ENCODE measurements at regions of chr6 and their contacts with region 1.

Region 1: DNA sequence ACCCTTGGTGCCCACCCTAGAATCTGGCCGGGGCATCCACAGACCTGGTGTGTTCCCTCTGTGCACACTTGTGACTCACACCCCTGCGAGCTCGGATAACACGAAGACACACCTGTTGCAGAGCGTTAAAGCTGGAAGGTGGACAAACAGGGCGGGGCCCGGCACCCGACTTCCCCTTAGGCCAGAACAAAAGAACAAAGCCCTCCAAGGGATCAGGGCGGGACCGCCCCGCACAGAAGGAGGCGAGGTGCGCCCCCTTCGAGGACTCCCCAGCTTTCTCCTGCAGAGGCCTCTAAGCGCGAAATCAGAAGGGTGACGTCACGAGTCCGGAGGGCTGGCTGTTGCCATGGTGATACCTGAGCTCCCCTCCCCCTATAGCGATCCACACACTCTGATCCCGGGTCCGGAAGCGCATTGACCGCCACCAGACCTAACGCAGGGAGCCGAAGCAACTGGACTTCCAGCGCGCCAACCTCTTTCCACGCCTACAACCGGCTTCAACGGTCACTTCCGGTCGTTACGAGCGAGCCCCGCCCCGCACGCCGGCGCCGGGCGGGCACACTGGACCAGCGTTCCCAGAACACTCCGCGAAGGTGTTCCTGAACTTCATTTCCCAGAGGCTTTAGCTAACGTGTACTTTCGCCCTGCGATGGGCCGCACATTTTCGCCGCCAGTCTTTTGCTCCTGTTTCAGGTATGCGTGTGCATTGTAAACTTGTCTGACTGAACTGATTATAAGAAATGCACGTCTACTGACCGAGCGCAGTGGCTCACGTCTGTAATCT is at the start of gene ZNF184:
- DNase-seq: peak; percentile 74 to 88 (median 86)
- ATAC-seq: peak; percentile 88
- H3K4me3 ChIP-seq: peak within 1 kb of the TSS; percentile 85
- H3K4me3 Mint-ChIP-seq: peak within 1 kb of the TSS; percentile 85 to 98 (median 97)
- H3K27ac ChIP-seq: peak within 1 kb of the TSS; percentile 93
- H3K27ac Mint-ChIP-seq: peak within 1 kb of the TSS; percentile 90 to 99 (median 96)
- H3K4me1 ChIP-seq: peaks cover 13 to 23% of the 10 kb centered on the region in 2 donors
- H3K4me1 Mint-ChIP-seq: peaks cover 40 to 55% (median 52%) of the 10 kb centered on the region in 7 donors
- H3K27me3 ChIP-seq: no peaks in the 10 kb centered on the region
- H3K27me3 Mint-ChIP-seq: peaks cover 0 to 9% (median 0%) of the 10 kb centered on the region in 5 donors
- total RNA-seq, gene ZNF184: 9.6 to 13.7 (median 12.3) TPM

Region 2: GRCh38 chr6:27177485-27178406 is 295.1 kb before region 1 on chr6:
- CTCF ChIA-PET with region 1: no interaction called
- POLR2A ChIA-PET with region 1: interaction called, 22 read pairs
- intact Hi-C with region 1: loop called (anchors 1 to 2 kb)
- DNase-seq: peak; percentile 49 to 78 (median 66)
- ATAC-seq: peak; percentile 83
- H3K4me3 ChIP-seq: peak overlapping the region; percentile 99
- H3K4me3 Mint-ChIP-seq: peak overlapping the region; percentile 90 to 98 (median 96)
- H3K27ac ChIP-seq: peak overlapping the region; percentile 74
- H3K27ac Mint-ChIP-seq: peak overlapping the region; percentile 79 to 100 (median 95)
- H3K4me1 ChIP-seq: peaks cover 0 to 3% of the 10 kb centered on the region in 2 donors
- H3K4me1 Mint-ChIP-seq: peaks cover 0 to 33% (median 14%) of the 10 kb centered on the region in 7 donors
- H3K27me3 ChIP-seq: no peaks in the 10 kb centered on the region
- H3K27me3 Mint-ChIP-seq: peaks cover 0 to 37% (median 0%) of the 10 kb centered on the region in 5 donors

Region 3: DNA sequence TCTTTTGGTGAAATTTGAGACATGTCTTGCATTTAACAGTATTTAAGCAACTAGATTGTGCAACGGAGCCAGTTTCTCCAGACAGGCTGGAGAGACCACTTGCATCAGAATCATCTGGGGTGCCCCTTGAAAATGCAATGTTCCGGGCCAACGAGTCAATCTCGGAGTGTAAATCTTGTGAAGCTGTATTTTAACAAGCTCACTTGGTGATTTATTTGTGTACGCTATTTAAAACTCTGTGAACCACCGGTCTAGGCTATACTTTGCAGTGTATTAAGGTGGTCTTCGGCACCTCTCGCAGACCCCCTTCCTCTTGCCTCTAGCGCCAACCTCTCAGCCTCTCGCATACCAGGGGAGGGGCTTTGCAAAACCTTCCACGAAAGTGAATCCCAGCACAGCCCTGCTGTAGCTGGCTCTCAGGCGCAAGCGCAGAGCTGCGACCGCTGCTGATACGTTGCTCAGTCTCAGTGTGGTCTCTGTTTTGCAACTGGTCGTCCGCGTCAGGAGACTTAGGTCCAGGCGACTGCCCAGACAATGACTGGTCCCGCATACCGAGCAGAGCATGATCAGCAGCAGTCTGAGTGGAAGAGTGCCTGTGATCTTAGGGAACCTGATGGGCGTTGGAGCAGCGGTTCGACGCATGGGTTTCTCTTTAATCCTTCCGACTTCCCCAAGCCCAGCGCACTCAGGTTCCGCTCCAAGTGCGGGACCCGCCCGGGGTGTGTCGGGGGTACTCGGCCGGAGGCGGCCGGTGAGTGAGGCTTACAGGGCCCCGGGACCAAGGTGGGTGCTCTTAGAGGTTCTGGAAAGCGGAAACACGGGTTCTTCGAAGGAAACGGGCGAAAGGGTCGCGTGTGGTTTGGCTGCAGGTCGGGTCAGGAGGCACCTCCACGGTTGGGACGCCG is 84.3 kb before region 1 on chr6 and contains the start of gene ZNF391:
- CTCF ChIA-PET with region 1: no interaction called
- POLR2A ChIA-PET with region 1: interaction called, 6 read pairs
- intact Hi-C with region 1: loop called (anchors 1 to 2 kb)
- DNase-seq: peak; percentile 46 to 77 (median 67)
- ATAC-seq: peak; percentile 90
- H3K4me3 ChIP-seq: peak within 1 kb of the TSS; percentile 92
- H3K4me3 Mint-ChIP-seq: peak within 1 kb of the TSS; percentile 95 to 99 (median 98)
- H3K27ac ChIP-seq: peak within 1 kb of the TSS; percentile 78
- H3K27ac Mint-ChIP-seq: peak within 1 kb of the TSS; percentile 85 to 96 (median 93)
- H3K4me1 ChIP-seq: peaks cover 4 to 9% of the 10 kb centered on the region in 2 donors
- H3K4me1 Mint-ChIP-seq: peaks cover 9 to 31% (median 18%) of the 10 kb centered on the region in 7 donors
- H3K27me3 ChIP-seq: no peaks in the 10 kb centered on the region
- H3K27me3 Mint-ChIP-seq: peaks cover 0 to 9% (median 2%) of the 10 kb centered on the region in 5 donors
- total RNA-seq, gene ZNF391: 0.19 to 5.7 (median 3.3) TPM

Region 4: GRCh38 chr6:27687154-27688013 is 214.6 kb after region 1 on chr6:
- CTCF ChIA-PET with region 1: no interaction called
- POLR2A ChIA-PET with region 1: no interaction called
- intact Hi-C with region 1: loop called in 1 of 2 experiments (anchors 10 kb)
- DNase-seq: peak; percentile 57 to 79 (median 65)
- ATAC-seq: peak; percentile 81
- H3K4me3 ChIP-seq: peak overlapping the region; percentile 88
- H3K4me3 Mint-ChIP-seq: peak overlapping the region; percentile 87 to 96 (median 94)
- H3K27ac ChIP-seq: peak overlapping the region; percentile 61
- H3K27ac Mint-ChIP-seq: peak overlapping the region; percentile 86 to 100 (median 97)
- H3K4me1 ChIP-seq: peaks cover 4 to 6% of the 10 kb centered on the region in 2 donors
- H3K4me1 Mint-ChIP-seq: peaks cover 7 to 40% (median 27%) of the 10 kb centered on the region in 7 donors
- H3K27me3 ChIP-seq: no peaks in the 10 kb centered on the region
- H3K27me3 Mint-ChIP-seq: peaks cover 5 to 34% (median 5%) of the 10 kb centered on the region in 5 donors

Region 5: DNA sequence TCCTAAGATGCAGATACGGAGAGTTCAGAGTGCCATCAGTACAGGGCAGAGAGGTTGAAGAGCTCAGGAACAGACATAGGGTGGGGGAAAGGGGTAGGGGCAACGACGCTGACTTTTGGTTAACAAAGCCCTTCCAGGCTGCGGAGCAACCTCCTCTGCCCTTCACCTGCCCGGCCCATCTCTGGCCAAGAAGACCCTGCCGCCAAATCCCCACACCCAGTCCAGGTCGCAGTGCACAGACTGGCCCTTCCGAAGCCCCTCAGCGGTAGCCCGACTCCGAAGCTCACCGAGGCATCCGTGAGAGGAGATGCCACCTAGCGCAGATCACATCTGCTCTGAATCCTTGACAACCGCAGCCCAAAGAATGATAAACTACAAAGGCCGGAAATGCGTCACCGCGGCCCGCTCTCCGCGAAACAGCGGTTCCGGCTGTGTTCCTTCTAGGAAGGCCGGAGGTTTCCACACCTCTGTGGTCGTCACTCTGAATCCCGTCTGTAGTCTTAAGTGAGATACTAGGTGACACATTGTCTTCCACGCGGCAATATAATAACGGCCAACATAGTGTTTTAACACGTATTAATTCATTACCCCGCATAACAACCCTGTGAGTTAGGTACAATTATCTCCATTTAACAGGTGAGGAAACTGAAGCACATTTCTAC is 970.4 kb after region 1 on chr6 and contains the start of gene ZSCAN23:
- CTCF ChIA-PET with region 1: no interaction called
- POLR2A ChIA-PET with region 1: no interaction called
- intact Hi-C with region 1: loop called in 1 of 2 experiments (anchors 10 kb)
- DNase-seq: peak; percentile 59 to 93 (median 88)
- ATAC-seq: peak; percentile 96
- H3K4me3 ChIP-seq: peak within 1 kb of the TSS; percentile 76
- H3K4me3 Mint-ChIP-seq: peak within 1 kb of the TSS; percentile 86 to 98 (median 96)
- H3K27ac ChIP-seq: peak within 1 kb of the TSS; percentile 60
- H3K27ac Mint-ChIP-seq: peak within 1 kb of the TSS; percentile 76 to 97 (median 93)
- H3K4me1 ChIP-seq: peaks cover 13 to 16% of the 10 kb centered on the region in 2 donors
- H3K4me1 Mint-ChIP-seq: peaks cover 15 to 38% (median 32%) of the 10 kb centered on the region in 7 donors
- H3K27me3 ChIP-seq: peaks cover 0 to 6% of the 10 kb centered on the region in 2 donors
- H3K27me3 Mint-ChIP-seq: peaks cover 9 to 36% (median 30%) of the 10 kb centered on the region in 5 donors
- total RNA-seq, gene ZSCAN23: 1.4 to 3.4 (median 2.4) TPM

Region 6: GRCh38 chr6:28940858-28941680 is 1468.3 kb after region 1 on chr6:
- CTCF ChIA-PET with region 1: no interaction called
- POLR2A ChIA-PET with region 1: no interaction called
- intact Hi-C with region 1: loop called (anchors 2 to 10 kb)
- DNase-seq: peak; percentile 35 to 90 (median 83)
- ATAC-seq: peak; percentile 76
- H3K4me3 ChIP-seq: peak overlapping the region; percentile 82
- H3K4me3 Mint-ChIP-seq: peak overlapping the region; percentile 86 to 99 (median 92)
- H3K27ac ChIP-seq: peak overlapping the region; percentile 60
- H3K27ac Mint-ChIP-seq: peak overlapping the region; percentile 90 to 99 (median 94)
- H3K4me1 ChIP-seq: peaks cover 22 to 30% of the 10 kb centered on the region in 2 donors
- H3K4me1 Mint-ChIP-seq: peaks cover 34 to 64% (median 56%) of the 10 kb centered on the region in 7 donors
- H3K27me3 ChIP-seq: no peaks in the 10 kb centered on the region
- H3K27me3 Mint-ChIP-seq: peaks cover 0 to 6% (median 0%) of the 10 kb centered on the region in 5 donors